Heart left ventricle (tissue), 16 donors: ENCODE measurements at regions of chr2 and their contacts with region 1.

Region 1: GRCh38 chr2:228056293-228057097 is 125.0 kb downstream of the SPHKAP start:
- DNase-seq: no peak
- ATAC-seq: no peak
- H3K4me3 ChIP-seq: no peak overlapping the region
- H3K27ac ChIP-seq: no peak overlapping the region
- H3K4me1 ChIP-seq: peaks cover 0 to 32% (median 0%) of the 10 kb centered on the region in 12 donors
- H3K27me3 ChIP-seq: no peaks in the 10 kb centered on the region
- CTCF ChIP-seq: no peak
- POLR2A ChIP-seq: no peak

Region 2: DNA sequence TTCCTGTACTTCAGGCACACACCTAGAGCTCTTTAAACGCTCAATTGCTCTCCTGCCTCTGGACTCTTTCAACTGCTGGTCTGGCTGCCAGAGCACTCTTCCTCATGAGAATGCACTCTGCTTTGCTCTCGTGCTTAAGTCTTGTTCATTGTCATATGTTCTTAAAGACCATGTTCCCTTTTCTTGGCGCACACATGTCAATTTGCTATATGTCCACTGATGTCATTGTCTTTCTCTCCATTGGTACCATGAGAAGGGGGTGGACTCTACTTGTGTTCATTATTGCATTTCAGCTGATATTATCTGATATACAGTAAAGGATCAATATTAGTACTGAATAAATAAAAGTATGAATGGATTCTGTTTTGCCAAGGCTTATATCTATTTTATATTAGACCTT is 108.2 kb after region 1 on chr2:
- intact Hi-C with region 1: loop called in 1 of 10 experiments (anchors 10 kb)
- DNase-seq: no peak
- ATAC-seq: peak in 1 of 4 donors; percentile 24
- H3K4me3 ChIP-seq: no peak overlapping the region
- H3K27ac ChIP-seq: no peak overlapping the region
- H3K4me1 ChIP-seq: peaks cover 0 to 5% (median 0%) of the 10 kb centered on the region in 12 donors
- H3K27me3 ChIP-seq: no peaks in the 10 kb centered on the region
- CTCF ChIP-seq: no peak
- POLR2A ChIP-seq: no peak

Region 3: GRCh38 chr2:228197504-228197903 is 141.0 kb after region 1 on chr2:
- intact Hi-C with region 1: no loop called
- DNase-seq: no peak
- ATAC-seq: no peak
- H3K4me3 ChIP-seq: no peak overlapping the region
- H3K27ac ChIP-seq: no peak overlapping the region
- H3K4me1 ChIP-seq: no peaks in the 10 kb centered on the region
- H3K27me3 ChIP-seq: no peaks in the 10 kb centered on the region
- CTCF ChIP-seq: no peak
- POLR2A ChIP-seq: no peak

Region 4: GRCh38 chr2:228318218-228318617 is 261.7 kb after region 1 on chr2:
- intact Hi-C with region 1: loop called in 2 of 10 experiments (anchors 10 kb)
- DNase-seq: peak in 4 of 5 donors; percentile 16 to 48 (median 32)
- ATAC-seq: peak; percentile 61 to 88 (median 80)
- H3K4me3 ChIP-seq: no peak overlapping the region
- H3K27ac ChIP-seq: peak overlapping the region in 1 of 12 donors; percentile 43
- H3K4me1 ChIP-seq: peaks cover 0 to 19% (median 9%) of the 10 kb centered on the region in 12 donors
- H3K27me3 ChIP-seq: no peaks in the 10 kb centered on the region
- CTCF ChIP-seq: peak; percentile 20 to 58 (median 44)
- POLR2A ChIP-seq: no peak

Region 5: GRCh38 chr2:228329282-228329681 is 272.8 kb after region 1 on chr2:
- intact Hi-C with region 1: loop called in 1 of 10 experiments (anchors 10 kb)
- DNase-seq: peak in 4 of 5 donors; percentile 36 to 57 (median 52)
- ATAC-seq: peak; percentile 91 to 96 (median 94)
- H3K4me3 ChIP-seq: no peak overlapping the region
- H3K27ac ChIP-seq: peak overlapping the region in 9 of 12 donors; percentile 0 to 72 (median 62)
- H3K4me1 ChIP-seq: peaks cover 0 to 11% (median 0%) of the 10 kb centered on the region in 12 donors
- H3K27me3 ChIP-seq: no peaks in the 10 kb centered on the region
- CTCF ChIP-seq: no peak
- POLR2A ChIP-seq: no peak

Region 6: GRCh38 chr2:228652366-228652765 is 595.9 kb after region 1 on chr2:
- intact Hi-C with region 1: loop called in 2 of 10 experiments (anchors 5 kb)
- DNase-seq: no peak
- ATAC-seq: no peak
- H3K4me3 ChIP-seq: no peak overlapping the region
- H3K27ac ChIP-seq: no peak overlapping the region
- H3K4me1 ChIP-seq: peaks cover 0 to 14% (median 0%) of the 10 kb centered on the region in 12 donors
- H3K27me3 ChIP-seq: no peaks in the 10 kb centered on the region
- CTCF ChIP-seq: no peak
- POLR2A ChIP-seq: no peak